ENCODE measurements at regions of chr20 and their contacts with region 1.

Region 1: DNA sequence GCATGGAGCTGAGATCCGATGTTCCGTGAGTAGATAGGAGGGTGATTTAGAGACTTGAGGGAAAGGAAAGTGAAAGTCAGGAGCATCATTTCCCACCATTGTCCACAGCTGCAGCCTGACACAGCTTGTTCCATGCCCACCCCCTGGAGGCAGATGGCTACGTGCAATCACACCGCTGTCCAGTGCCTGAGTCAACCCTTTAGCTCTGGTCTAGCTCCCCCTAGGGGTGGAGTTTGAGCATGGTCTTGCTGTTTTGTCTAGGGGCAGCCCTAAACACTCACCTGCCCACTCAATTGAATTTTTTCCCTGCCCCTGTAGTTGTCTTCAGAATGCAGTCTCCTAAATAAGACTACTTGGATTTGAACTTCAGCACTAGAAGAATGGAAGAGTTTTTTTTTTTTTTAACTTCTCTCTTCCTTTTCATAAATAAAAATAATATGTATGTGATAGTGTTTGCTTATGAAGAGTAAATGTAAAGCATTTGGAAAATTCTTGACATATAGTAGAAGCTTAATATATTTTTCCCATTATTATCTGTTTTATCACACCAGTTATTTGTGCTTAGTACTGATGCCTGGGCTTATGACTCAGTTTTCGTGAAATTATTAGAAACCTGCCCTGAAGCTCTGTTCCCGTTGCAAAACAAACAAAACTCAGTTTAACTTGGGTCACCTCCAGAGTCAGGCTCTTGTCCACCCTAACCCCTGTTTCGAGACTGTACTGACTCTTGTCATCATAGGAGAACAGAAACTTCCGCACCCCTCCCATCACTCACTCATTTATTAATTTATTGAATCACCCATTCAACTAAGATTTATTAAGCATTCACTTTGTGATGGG is 814.8 kb downstream of the MAFB start:
- DNase-seq: peak; percentile 89
- ATAC-seq: peak; percentile 93
- H3K4me3 ChIP-seq: no peak overlapping the region
- H3K27ac ChIP-seq: no peak overlapping the region
- H3K4me1 ChIP-seq: no peaks in the 10 kb centered on the region
- H3K27me3 ChIP-seq: 0 out of 2 replicates have a peak, but pooled peaks cover 3% of the 10 kb centered on the region
- CTCF ChIP-seq: peak; percentile 95
- POLR2A ChIP-seq: no peak
- RAD21 ChIP-seq: peak; percentile 91

Region 2: GRCh38 chr20:39112178-39112743 is 762.0 kb before region 1 on chr20:
- CTCF ChIA-PET with region 1: no interaction called
- POLR2A ChIA-PET with region 1: no interaction called
- dilution Hi-C with region 1: no loop called
- in situ Hi-C with region 1: no loop called
- intact Hi-C with region 1: loop called (anchors 5 kb)
- DNase-seq: peak; percentile 28
- ATAC-seq: peak; percentile 96
- H3K4me3 ChIP-seq: no peak overlapping the region
- H3K27ac ChIP-seq: no peak overlapping the region
- H3K4me1 ChIP-seq: no peaks in the 10 kb centered on the region
- H3K27me3 ChIP-seq: peaks cover 8% of the 10 kb centered on the region
- CTCF ChIP-seq: peak; percentile 52
- POLR2A ChIP-seq: no peak
- RAD21 ChIP-seq: peak; percentile 62

Region 3: GRCh38 chr20:39245685-39246311 is 628.5 kb before region 1 on chr20:
- CTCF ChIA-PET with region 1: no interaction called
- POLR2A ChIA-PET with region 1: no interaction called
- dilution Hi-C with region 1: no loop called
- in situ Hi-C with region 1: no loop called
- intact Hi-C with region 1: no loop called
- DNase-seq: no peak
- ATAC-seq: no peak
- H3K4me3 ChIP-seq: no peak overlapping the region
- H3K27ac ChIP-seq: no peak overlapping the region
- H3K4me1 ChIP-seq: no peaks in the 10 kb centered on the region
- H3K27me3 ChIP-seq: no peaks in the 10 kb centered on the region
- CTCF ChIP-seq: no peak
- POLR2A ChIP-seq: no peak
- RAD21 ChIP-seq: no peak

Region 4: GRCh38 chr20:39264506-39265172 is 609.6 kb before region 1 on chr20:
- CTCF ChIA-PET with region 1: interaction called, 4 read pairs
- POLR2A ChIA-PET with region 1: no interaction called
- dilution Hi-C with region 1: no loop called
- in situ Hi-C with region 1: no loop called
- intact Hi-C with region 1: loop called (anchors 2 kb)
- DNase-seq: peak; percentile 71
- ATAC-seq: peak; percentile 80
- H3K4me3 ChIP-seq: no peak overlapping the region
- H3K27ac ChIP-seq: no peak overlapping the region
- H3K4me1 ChIP-seq: no peaks in the 10 kb centered on the region
- H3K27me3 ChIP-seq: no peaks in the 10 kb centered on the region
- CTCF ChIP-seq: peak; percentile 68
- POLR2A ChIP-seq: no peak
- RAD21 ChIP-seq: peak; percentile 43; the same call in 1 of the 2 replicates

Region 5: GRCh38 chr20:39829256-39829655 is 45.0 kb before region 1 on chr20:
- CTCF ChIA-PET with region 1: interaction called, 15 read pairs
- POLR2A ChIA-PET with region 1: no interaction called
- dilution Hi-C with region 1: no loop called
- in situ Hi-C with region 1: no loop called
- intact Hi-C with region 1: loop called (anchors 1 kb)
- DNase-seq: peak; percentile 41
- ATAC-seq: no peak
- H3K4me3 ChIP-seq: no peak overlapping the region
- H3K27ac ChIP-seq: no peak overlapping the region
- H3K4me1 ChIP-seq: no peaks in the 10 kb centered on the region
- H3K27me3 ChIP-seq: peaks cover 17% of the 10 kb centered on the region
- CTCF ChIP-seq: peak; percentile 73
- POLR2A ChIP-seq: no peak
- RAD21 ChIP-seq: peak; percentile 83

Region 6: DNA sequence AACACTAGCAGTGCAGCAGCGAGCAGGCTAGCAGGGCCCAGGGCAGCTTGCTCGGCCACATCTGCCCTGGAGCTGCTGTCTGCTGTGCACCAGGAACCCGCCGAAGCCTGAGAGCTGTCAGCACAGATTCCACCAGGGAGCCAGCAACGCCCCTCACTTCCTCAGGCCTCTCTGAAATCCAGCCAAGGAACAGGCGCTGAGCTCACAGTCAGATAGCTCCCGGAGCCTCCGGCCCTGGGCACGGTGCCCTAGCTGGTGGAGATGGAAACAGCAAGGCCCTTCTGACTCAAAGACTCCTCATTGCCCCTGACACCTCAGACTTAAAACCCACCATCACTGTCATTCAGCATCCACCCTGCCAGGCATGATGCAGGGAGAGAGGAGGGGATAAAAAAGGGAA is 24.6 kb before region 1 on chr20:
- CTCF ChIA-PET with region 1: interaction called, 14 read pairs
- POLR2A ChIA-PET with region 1: no interaction called
- dilution Hi-C with region 1: no loop called
- in situ Hi-C with region 1: no loop called
- intact Hi-C with region 1: no loop called
- DNase-seq: peak; percentile 94
- ATAC-seq: peak; percentile 83
- H3K4me3 ChIP-seq: no peak overlapping the region
- H3K27ac ChIP-seq: no peak overlapping the region
- H3K4me1 ChIP-seq: peaks cover 33% of the 10 kb centered on the region
- H3K27me3 ChIP-seq: peaks cover 6% of the 10 kb centered on the region; the same call in 1 of the 2 replicates
- CTCF ChIP-seq: no peak
- POLR2A ChIP-seq: no peak
- RAD21 ChIP-seq: peak; percentile 29

Measured in IMR-90 (cell line).